Mammary epithelial cell (primary cell): ENCODE measurements at regions of chr11 and their contacts with region 1.

Region 1: GRCh38 chr11:83349296-83349695 is 63.1 kb upstream of the CCDC90B start:
- DNase-seq: no peak
- H3K4me3 ChIP-seq: no peak overlapping the region
- H3K27ac ChIP-seq: no peak overlapping the region
- H3K4me1 ChIP-seq: no peaks in the 10 kb centered on the region
- H3K27me3 ChIP-seq: no peaks in the 10 kb centered on the region
- CTCF ChIP-seq: no peak

Region 2: DNA sequence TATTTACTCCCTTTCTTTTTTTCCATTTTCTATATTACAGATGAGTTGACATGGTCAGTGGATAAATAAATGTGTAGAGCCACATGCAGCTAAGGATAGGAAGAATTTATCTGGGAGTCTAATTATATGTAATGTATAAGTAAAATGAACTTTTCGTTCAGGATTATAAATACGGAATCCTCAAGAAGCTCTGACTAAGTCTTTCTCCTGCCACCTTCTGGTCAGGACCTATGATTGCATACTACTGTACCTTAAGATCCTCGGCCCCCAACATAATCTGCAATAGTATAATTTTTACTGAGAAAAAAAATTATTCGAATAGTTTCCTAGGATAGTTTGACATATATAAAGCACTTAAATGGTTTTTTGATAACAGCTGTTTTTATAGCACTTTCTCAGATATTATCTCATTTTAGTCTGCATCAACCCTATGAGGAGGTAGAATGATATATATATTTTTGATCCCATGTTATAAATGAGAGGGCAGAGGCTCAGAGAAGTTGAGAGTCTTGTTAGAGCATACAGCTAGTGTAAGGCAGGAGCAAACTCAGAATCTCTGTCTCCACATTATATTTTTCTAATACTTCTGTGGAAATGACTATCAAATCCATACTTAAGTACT is 99.2 kb before region 1 on chr11:
- CTCF ChIA-PET with region 1: no interaction called
- dilution Hi-C with region 1: no loop called
- in situ Hi-C with region 1: no loop called
- intact Hi-C with region 1: no loop called
- DNase-seq: peak; percentile 20
- H3K4me3 ChIP-seq: no peak overlapping the region
- H3K27ac ChIP-seq: no peak overlapping the region
- H3K4me1 ChIP-seq: no peaks in the 10 kb centered on the region
- H3K27me3 ChIP-seq: no peaks in the 10 kb centered on the region
- CTCF ChIP-seq: peak; percentile 62 to 69

Region 3: GRCh38 chr11:83410605-83411565 is 61.6 kb after region 1 on chr11:
- CTCF ChIA-PET with region 1: no interaction called
- dilution Hi-C with region 1: loop called (anchors 5 kb)
- in situ Hi-C with region 1: no loop called
- intact Hi-C with region 1: no loop called
- DNase-seq: no peak
- H3K4me3 ChIP-seq: no peak overlapping the region
- H3K27ac ChIP-seq: no peak overlapping the region
- H3K4me1 ChIP-seq: no peaks in the 10 kb centered on the region
- H3K27me3 ChIP-seq: no peaks in the 10 kb centered on the region
- CTCF ChIP-seq: no peak

Region 4: GRCh38 chr11:83502041-83502440 is 152.7 kb after region 1 on chr11:
- CTCF ChIA-PET with region 1: no interaction called
- dilution Hi-C with region 1: no loop called
- in situ Hi-C with region 1: no loop called
- intact Hi-C with region 1: no loop called
- DNase-seq: no peak
- H3K4me3 ChIP-seq: no peak overlapping the region
- H3K27ac ChIP-seq: no peak overlapping the region
- H3K4me1 ChIP-seq: no peaks in the 10 kb centered on the region
- H3K27me3 ChIP-seq: no peaks in the 10 kb centered on the region
- CTCF ChIP-seq: no peak